ENCODE measurements at regions of chr11 and their contacts with region 1.

Region 1: DNA sequence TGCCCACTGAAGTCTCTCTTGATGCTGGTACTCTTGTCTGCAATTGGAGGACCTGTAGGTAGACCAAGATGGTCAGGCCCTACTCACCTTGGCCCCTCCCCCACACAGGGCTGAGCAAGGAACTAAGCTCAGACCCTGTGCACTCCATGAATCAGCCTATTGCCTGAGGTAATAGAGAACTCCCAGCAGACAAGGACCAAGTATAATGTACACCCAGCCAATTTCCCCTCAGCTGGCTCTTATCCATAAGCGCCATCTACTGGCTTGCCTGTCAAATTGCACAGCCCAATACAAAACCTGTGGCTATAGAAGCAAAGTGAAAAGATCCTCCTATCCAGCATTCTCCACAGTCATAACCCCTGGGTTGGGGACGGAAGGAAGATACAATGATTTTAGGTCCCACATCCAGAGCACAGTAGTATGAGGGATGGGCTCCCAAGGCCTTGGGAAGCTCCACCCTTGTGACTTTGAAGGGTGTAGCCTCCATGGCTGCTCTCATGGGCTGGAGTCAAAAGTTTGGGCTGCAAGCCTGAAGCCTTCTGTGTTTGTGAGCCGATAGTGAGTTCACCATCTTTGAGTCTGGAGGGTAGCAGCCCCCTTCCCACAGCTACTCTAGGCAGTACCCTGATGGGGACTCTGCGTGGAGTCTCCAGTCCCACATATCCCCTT is 56.0 kb downstream of the GLYATL2 start:
- DNase-seq: peak; percentile 66
- H3K4me3 Mint-ChIP-seq: no peak overlapping the region
- H3K27ac Mint-ChIP-seq: no peak overlapping the region
- H3K4me1 Mint-ChIP-seq: no peaks in the 10 kb centered on the region
- H3K27me3 Mint-ChIP-seq: peaks cover 5% of the 10 kb centered on the region

Region 2: DNA sequence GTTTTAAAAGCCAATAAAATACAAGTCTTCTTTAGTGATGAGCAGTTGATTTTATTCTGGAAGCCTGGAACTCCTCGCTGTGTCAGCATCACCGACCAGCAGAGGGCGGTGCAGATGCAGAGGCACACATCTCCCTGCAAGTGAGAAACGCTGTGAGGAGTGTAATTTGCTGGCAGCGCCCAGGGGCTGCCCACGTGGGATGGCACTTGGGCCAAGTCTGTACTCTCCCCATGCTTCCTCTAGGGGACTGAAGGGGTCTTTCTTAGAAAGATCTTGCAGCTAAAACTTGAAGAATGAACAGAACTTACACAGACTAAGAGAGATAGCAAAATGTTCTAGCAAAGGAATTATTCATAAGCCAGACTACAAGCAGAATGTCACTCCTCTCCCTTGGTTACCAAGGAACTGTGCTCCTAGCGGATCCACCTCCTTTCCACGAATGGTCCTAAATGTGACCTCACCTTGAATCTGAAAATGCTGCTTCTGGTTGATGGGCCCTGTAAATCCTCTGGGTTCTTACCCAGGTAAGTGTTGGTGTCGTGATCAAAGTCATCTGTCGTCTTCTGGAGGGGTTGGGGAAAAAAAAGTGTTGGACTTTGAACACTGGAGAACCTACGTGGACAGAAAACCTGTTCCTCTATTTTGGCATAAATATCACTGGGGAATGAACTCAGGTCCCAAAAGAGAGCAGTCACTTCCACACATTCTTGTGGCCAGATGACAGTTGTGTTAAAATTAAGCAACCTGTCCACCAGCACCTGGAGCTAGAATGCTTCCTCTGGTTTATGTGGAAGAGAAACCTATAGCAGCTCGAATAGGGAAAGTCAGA is 134.2 kb before region 1 on chr11:
- CTCF ChIA-PET with region 1: interaction called, 32 read pairs
- intact Hi-C with region 1: loop called (anchors 1 kb)
- DNase-seq: peak; percentile 89
- H3K4me3 Mint-ChIP-seq: no peak overlapping the region
- H3K27ac Mint-ChIP-seq: no peak overlapping the region
- H3K4me1 Mint-ChIP-seq: peaks cover 18% of the 10 kb centered on the region
- H3K27me3 Mint-ChIP-seq: no peaks in the 10 kb centered on the region

Region 3: DNA sequence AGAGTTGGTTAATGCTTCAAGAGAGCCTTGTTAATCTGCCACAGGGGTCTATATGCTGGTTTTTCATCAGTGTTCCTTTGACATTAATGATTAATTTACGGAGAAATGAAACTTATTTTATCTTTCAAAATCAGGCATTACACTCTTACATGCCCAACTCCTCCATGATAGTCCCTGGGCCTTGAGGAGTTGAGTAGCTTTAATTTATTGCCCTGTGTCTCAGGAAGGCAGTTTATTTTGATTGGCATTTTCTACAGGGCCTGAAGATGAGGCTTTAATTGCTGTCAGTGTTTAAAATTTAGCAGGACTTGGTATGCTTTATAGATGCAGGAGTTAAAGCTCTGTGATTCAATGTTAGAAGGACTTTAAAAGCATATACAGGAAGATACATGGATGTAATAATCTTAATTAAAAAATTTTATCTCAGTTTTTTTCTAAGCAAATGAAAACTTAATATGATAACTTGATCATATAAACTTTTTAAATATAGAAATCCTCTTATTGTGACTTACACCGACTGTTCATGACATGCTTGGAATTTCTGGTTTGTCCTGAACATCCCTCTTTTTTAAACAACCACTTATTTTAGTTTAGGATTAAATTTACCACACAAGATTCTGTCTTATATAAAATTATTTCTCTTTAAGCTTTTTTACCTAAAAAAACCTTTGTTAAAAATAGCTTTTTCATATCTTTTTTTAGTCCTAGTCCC is 68.9 kb before region 1 on chr11:
- CTCF ChIA-PET with region 1: interaction called, 3 read pairs
- intact Hi-C with region 1: loop called (anchors 2 kb)
- DNase-seq: no peak
- H3K4me3 Mint-ChIP-seq: no peak overlapping the region
- H3K27ac Mint-ChIP-seq: no peak overlapping the region
- H3K4me1 Mint-ChIP-seq: no peaks in the 10 kb centered on the region
- H3K27me3 Mint-ChIP-seq: no peaks in the 10 kb centered on the region

Region 4: DNA sequence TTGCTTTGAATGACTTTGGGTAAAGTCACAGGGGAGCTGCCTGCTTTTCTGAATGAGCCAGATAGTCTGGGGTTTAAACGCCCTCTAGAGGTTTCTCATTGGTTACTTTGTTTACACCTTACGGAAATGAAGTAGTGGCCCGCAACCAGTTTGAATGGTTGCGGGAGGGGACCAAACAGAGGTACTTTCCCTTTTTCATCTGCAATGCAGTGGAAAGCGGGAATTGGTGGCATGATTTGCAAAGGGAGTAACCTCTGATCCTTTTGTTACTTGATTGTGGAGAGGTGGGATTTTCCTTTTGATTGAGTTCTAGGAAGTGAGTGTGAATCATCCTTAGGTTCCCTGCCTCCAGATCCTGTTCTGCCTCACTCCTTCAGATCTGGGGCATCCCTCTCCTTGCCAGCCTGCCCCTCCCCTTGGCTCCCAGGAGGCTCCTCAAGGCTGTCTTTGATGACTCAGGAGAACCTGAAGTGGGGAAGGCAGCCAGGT is 134.9 kb after region 1 on chr11:
- CTCF ChIA-PET with region 1: no interaction called
- intact Hi-C with region 1: loop called (anchors 5 kb)
- DNase-seq: peak; percentile 61
- H3K4me3 Mint-ChIP-seq: no peak overlapping the region
- H3K27ac Mint-ChIP-seq: peak overlapping the region; percentile 11
- H3K4me1 Mint-ChIP-seq: peaks cover 25% of the 10 kb centered on the region
- H3K27me3 Mint-ChIP-seq: no peaks in the 10 kb centered on the region

Region 5: GRCh38 chr11:59076876-59077571 is 288.5 kb after region 1 on chr11:
- CTCF ChIA-PET with region 1: no interaction called
- intact Hi-C with region 1: no loop called
- DNase-seq: no peak
- H3K4me3 Mint-ChIP-seq: no peak overlapping the region
- H3K27ac Mint-ChIP-seq: no peak overlapping the region
- H3K4me1 Mint-ChIP-seq: peaks cover 10% of the 10 kb centered on the region
- H3K27me3 Mint-ChIP-seq: peaks cover 26% of the 10 kb centered on the region